PC-9 (cell line): ENCODE measurements at regions of chr9 and their contacts with region 1.

Region 1: DNA sequence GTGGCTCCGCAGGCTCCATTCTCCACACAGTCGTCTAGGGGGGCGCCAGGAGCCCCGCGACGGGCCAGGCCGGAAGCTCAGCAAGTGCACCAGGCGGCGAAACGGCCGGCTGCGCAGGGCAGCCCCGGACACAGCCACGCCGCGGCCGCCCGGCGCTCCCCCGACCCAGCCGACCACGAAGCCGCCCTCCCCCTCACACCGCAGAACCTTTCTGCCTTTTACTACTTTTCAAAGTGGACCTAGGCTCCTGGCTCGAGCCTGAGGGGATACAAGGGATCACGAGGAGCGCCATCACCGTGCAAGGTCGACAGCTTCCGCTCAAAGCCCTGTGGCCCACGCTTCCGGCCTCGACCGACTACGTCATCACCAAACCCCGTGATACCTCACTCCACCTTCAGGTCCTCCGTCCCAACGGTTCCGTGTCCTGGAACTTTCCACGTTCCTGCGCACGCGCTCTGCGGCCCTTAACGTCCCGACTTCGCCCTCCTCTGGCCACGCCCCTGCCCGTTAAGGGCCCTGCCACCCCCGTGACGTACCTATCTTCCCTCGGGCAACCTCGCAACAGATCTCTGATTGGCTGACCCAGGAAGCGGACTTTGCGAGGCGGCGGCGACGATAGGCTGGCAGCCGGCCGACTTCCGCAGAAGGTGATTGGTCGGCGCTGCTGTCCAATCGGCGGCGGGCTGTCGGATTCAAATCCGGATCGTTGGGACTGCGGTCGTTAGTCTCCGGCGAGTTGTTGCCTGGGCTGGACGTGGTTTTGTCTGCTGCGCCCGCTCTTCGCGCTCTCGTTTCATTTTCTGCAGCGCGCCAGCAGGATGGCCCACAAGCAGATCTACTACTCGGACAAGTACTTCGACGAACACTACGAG is at the start of gene CKS2:
- DNase-seq: peak; percentile 99 to 100
- H3K4me3 ChIP-seq: peak within 1 kb of the TSS; percentile 91
- H3K27ac ChIP-seq: peak within 1 kb of the TSS; percentile 93
- H3K4me1 ChIP-seq: peaks cover 36% of the 10 kb centered on the region
- H3K27me3 ChIP-seq: no peaks in the 10 kb centered on the region
- CTCF ChIP-seq: no peak
- total RNA-seq, gene CKS2: 138 and 260 TPM in 2 replicates

Region 2: GRCh38 chr9:89179895-89180667 is 130.6 kb before region 1 on chr9:
- CTCF ChIA-PET with region 1: no interaction called
- POLR2A ChIA-PET with region 1: interaction called, 7 read pairs
- intact Hi-C with region 1: loop called (anchors 1 kb)
- DNase-seq: peak; percentile 93 to 95
- H3K4me3 ChIP-seq: peak overlapping the region; percentile 62
- H3K27ac ChIP-seq: peak overlapping the region; percentile 78
- H3K4me1 ChIP-seq: peaks cover 34% of the 10 kb centered on the region
- H3K27me3 ChIP-seq: no peaks in the 10 kb centered on the region
- CTCF ChIP-seq: no peak

Region 3: DNA sequence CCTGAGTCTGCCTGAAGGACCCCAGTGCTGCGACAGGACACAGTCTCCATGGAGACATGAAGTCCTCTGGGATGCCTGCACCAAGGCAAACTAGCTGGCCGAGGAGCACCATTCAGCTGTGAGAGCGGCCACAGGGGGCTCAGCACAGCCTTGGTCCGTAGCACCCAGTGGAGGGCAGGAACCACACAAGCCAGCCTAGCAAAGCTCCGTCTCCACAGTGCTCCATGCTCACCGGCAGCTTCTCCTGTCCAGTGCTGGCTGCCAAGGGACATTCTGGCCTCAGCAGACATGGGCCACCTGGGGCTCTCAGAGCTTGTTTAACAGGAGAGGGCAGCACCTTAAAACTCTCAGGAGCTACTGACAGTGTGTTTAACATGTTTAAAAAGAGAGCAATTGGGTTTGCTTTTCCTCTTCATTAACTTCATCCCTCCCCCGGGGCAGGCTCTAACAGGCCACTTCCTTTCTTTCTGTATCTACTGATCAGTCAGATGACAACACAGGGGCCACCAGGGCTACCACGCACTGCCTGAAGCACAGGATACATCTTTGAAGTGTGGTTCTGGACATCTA is 64.6 kb after region 1 on chr9:
- CTCF ChIA-PET with region 1: no interaction called
- POLR2A ChIA-PET with region 1: no interaction called
- intact Hi-C with region 1: no loop called
- DNase-seq: no peak
- H3K4me3 ChIP-seq: no peak overlapping the region
- H3K27ac ChIP-seq: no peak overlapping the region
- H3K4me1 ChIP-seq: no peaks in the 10 kb centered on the region
- H3K27me3 ChIP-seq: no peaks in the 10 kb centered on the region
- CTCF ChIP-seq: no peak